ENCODE measurements at regions of chr3 and their contacts with region 1.

Region 1: DNA sequence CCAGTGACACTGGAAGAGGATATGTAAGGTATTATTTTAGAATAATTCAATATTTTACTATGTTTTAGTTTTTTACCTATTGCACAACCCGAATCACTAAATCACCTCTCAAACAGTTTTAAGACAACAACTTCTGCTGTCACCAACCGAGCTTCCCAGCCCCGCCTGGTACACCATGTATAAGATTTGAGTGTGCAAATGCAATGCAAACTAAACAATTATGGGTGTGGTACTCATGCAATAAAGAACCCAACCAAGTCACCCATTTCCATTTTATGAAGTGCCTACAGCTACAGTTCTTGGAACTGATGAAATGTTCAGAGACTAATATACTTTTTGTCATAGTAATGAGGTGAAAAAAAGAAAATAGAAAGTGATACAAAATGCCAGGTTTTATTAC is 256.2 kb downstream of the TAFA4 start:
- DNase-seq: no peak
- H3K4me3 ChIP-seq: no peak overlapping the region
- H3K27ac ChIP-seq: no peak overlapping the region
- H3K27me3 ChIP-seq: no peaks in the 10 kb centered on the region
- CTCF ChIP-seq: no peak

Region 2: GRCh38 chr3:67127254-67127653 is 1548.9 kb before region 1 on chr3:
- intact Hi-C with region 1: loop called in 1 of 2 experiments (anchors 5 kb)
- DNase-seq: no peak
- H3K4me3 ChIP-seq: no peak overlapping the region
- H3K27ac ChIP-seq: no peak overlapping the region
- H3K27me3 ChIP-seq: no peaks in the 10 kb centered on the region
- CTCF ChIP-seq: no peak

Measured in dorsolateral prefrontal cortex (tissue), 120 donors.